Calu3 (cell line): ENCODE measurements at regions of chr12 and their contacts with region 1.

Region 1: GRCh38 chr12:59452259-59452658 is 143.6 kb upstream of the SLC16A7 start:
- DNase-seq: peak; percentile 37
- H3K4me3 Mint-ChIP-seq: no peak overlapping the region
- H3K27ac Mint-ChIP-seq: peak overlapping the region; percentile 57
- H3K4me1 Mint-ChIP-seq: peaks cover 38% of the 10 kb centered on the region
- H3K27me3 Mint-ChIP-seq: no peaks in the 10 kb centered on the region
- CTCF ChIP-seq: no peak

Region 2: GRCh38 chr12:58593557-58594304 is 858.5 kb before region 1 on chr12:
- CTCF ChIA-PET with region 1: no interaction called
- intact Hi-C with region 1: no loop called
- DNase-seq: no peak
- H3K4me3 Mint-ChIP-seq: no peak overlapping the region
- H3K27ac Mint-ChIP-seq: no peak overlapping the region
- H3K4me1 Mint-ChIP-seq: no peaks in the 10 kb centered on the region
- H3K27me3 Mint-ChIP-seq: no peaks in the 10 kb centered on the region
- CTCF ChIP-seq: no peak

Region 3: GRCh38 chr12:59499774-59500173 is 47.5 kb after region 1 on chr12:
- CTCF ChIA-PET with region 1: no interaction called
- intact Hi-C with region 1: loop called (anchors 5 kb)
- DNase-seq: no peak
- H3K4me3 Mint-ChIP-seq: no peak overlapping the region
- H3K27ac Mint-ChIP-seq: peak overlapping the region; percentile 50
- H3K4me1 Mint-ChIP-seq: peaks cover 31% of the 10 kb centered on the region
- H3K27me3 Mint-ChIP-seq: no peaks in the 10 kb centered on the region
- CTCF ChIP-seq: no peak

Region 4: GRCh38 chr12:59517522-59517921 is 65.3 kb after region 1 on chr12:
- CTCF ChIA-PET with region 1: no interaction called
- intact Hi-C with region 1: loop called (anchors 5 kb)
- DNase-seq: no peak
- H3K4me3 Mint-ChIP-seq: no peak overlapping the region
- H3K27ac Mint-ChIP-seq: no peak overlapping the region
- H3K4me1 Mint-ChIP-seq: no peaks in the 10 kb centered on the region
- H3K27me3 Mint-ChIP-seq: no peaks in the 10 kb centered on the region
- CTCF ChIP-seq: no peak

Region 5: GRCh38 chr12:59619461-59620240 is 167.4 kb after region 1 on chr12:
- CTCF ChIA-PET with region 1: no interaction called
- intact Hi-C with region 1: no loop called
- DNase-seq: no peak
- H3K4me3 Mint-ChIP-seq: no peak overlapping the region
- H3K27ac Mint-ChIP-seq: no peak overlapping the region
- H3K4me1 Mint-ChIP-seq: peaks cover 19% of the 10 kb centered on the region
- H3K27me3 Mint-ChIP-seq: no peaks in the 10 kb centered on the region
- CTCF ChIP-seq: no peak

Region 6: GRCh38 chr12:59629890-59630289 is 177.6 kb after region 1 on chr12:
- CTCF ChIA-PET with region 1: no interaction called
- intact Hi-C with region 1: no loop called
- DNase-seq: no peak
- H3K4me3 Mint-ChIP-seq: no peak overlapping the region
- H3K27ac Mint-ChIP-seq: no peak overlapping the region
- H3K4me1 Mint-ChIP-seq: no peaks in the 10 kb centered on the region
- H3K27me3 Mint-ChIP-seq: no peaks in the 10 kb centered on the region
- CTCF ChIP-seq: no peak

Region 7: DNA sequence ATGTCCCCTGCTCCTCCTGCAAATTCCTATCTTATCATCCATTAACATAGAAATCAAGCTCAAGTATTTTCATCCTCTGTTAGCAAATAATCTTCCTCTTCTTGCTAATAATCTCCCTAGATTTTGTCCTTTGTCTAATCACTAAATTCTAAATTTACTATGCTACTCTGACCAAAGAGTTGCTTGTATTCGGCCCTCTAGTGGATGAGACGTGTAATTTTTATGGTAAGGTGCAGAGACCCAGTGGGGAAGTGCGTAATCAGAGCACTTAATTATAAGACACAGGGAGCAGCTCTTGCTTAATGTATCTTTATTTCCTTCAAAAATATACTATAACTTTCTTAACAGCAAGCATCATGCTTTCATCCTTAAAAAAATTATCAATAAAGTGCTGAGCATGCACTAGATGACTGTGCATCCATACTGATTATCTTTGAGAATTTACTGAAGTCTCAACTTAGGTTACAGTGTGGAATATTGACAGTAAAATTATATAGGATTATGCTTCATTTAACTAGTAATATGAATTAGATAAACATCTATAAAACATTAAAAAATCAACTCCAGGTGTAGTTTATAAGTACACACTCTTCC is 356.2 kb after region 1 on chr12:
- CTCF ChIA-PET with region 1: no interaction called
- intact Hi-C with region 1: loop called (anchors 5 kb)
- DNase-seq: no peak
- H3K4me3 Mint-ChIP-seq: no peak overlapping the region
- H3K27ac Mint-ChIP-seq: no peak overlapping the region
- H3K4me1 Mint-ChIP-seq: peaks cover 8% of the 10 kb centered on the region
- H3K27me3 Mint-ChIP-seq: no peaks in the 10 kb centered on the region
- CTCF ChIP-seq: peak; percentile 73